Heart left ventricle (tissue), 16 donors: ENCODE measurements at regions of chr9 and their contacts with region 1.

Region 1: DNA sequence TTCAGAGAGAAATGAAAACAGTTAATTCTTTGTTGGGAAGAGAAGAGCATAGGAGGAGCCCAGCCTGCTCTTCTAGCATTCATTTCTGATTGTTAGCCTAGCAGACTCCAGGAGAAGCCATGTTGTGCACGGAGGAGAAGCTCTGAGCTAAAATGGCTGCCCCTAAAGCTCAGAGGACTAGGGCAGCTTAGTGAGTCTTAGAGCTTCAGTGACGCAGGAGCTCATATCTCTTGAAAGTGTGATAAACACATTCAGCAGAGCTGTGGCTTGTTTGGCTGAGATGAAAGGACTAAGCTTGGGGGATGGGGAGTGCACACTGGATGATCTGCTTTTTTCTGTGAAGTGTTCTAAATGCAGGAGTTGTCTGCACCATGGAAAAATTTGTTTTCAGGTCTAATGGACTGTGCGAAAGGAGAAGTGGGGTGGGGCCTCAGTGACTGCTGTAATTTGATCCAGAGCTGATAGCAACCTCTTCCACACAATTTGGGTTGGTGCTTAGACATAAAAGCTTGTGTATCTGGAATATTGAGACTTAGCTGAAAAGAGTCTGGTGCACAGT is 58.5 kb downstream of the ZNF462 start:
- DNase-seq: peak in 4 of 5 donors; percentile 56 to 66 (median 62)
- ATAC-seq: peak; percentile 88 to 95 (median 94)
- H3K4me3 ChIP-seq: peak overlapping the region in 8 of 12 donors; percentile 3 to 28 (median 16)
- H3K27ac ChIP-seq: peak overlapping the region; percentile 84 to 97 (median 94)
- H3K4me1 ChIP-seq: peaks cover 0 to 63% (median 34%) of the 10 kb centered on the region in 12 donors
- H3K27me3 ChIP-seq: no peaks in the 10 kb centered on the region
- CTCF ChIP-seq: no peak
- POLR2A ChIP-seq: no peak

Region 2: GRCh38 chr9:106869458-106869857 is 52.0 kb before region 1 on chr9:
- intact Hi-C with region 1: loop called in 7 of 10 experiments (anchors 2 to 10 kb)
- DNase-seq: no peak
- ATAC-seq: peak; percentile 44 to 61 (median 56)
- H3K4me3 ChIP-seq: no peak overlapping the region
- H3K27ac ChIP-seq: peak overlapping the region; percentile 45 to 79 (median 62)
- H3K4me1 ChIP-seq: peaks cover 6 to 84% (median 53%) of the 10 kb centered on the region in 12 donors
- H3K27me3 ChIP-seq: no peaks in the 10 kb centered on the region
- CTCF ChIP-seq: no peak
- POLR2A ChIP-seq: no peak

Region 3: GRCh38 chr9:106878924-106879323 is 42.5 kb before region 1 on chr9:
- intact Hi-C with region 1: loop called in 4 of 10 experiments (anchors 1 to 5 kb)
- DNase-seq: peak; percentile 74 to 89 (median 80)
- ATAC-seq: peak; percentile 91 to 96 (median 94)
- H3K4me3 ChIP-seq: no peak overlapping the region
- H3K27ac ChIP-seq: peak overlapping the region; percentile 11 to 78 (median 69)
- H3K4me1 ChIP-seq: peaks cover 0 to 88% (median 58%) of the 10 kb centered on the region in 12 donors
- H3K27me3 ChIP-seq: no peaks in the 10 kb centered on the region
- CTCF ChIP-seq: no peak
- POLR2A ChIP-seq: no peak

Region 4: DNA sequence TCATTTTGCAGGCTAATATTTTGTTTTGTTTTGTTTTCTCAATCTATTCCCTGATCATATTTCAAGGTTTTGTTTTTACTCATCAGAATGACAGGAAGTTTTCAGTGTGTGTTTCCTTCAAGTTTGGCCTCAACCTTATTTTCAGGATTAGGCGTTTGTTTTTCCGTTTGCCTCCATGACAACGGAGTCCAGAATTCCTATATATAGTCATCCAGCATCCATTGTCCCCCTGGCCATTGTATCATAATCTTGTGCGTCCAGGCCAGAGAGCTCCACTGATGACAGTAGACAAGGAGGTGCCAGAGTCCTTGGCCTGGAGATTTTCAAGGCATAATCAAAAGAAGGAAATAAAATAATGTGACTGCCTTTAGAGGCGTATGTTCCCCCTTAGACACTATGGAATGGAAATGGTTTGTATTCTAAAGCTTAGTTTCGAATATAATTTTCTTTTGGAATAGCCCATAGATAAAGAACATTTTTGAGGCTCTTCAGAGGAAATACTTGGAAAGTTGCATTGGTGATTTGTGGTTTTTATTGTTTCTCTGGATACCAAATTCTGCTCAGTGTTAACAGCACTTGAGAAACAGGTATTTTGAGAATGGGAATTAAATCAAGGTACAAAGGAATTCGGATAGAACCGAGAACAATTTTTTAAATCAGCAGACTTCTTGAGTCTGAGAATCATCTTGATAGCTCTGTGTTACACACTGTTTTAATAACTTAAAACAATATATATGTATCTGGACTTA is 41.4 kb after region 1 on chr9:
- intact Hi-C with region 1: loop called in 2 of 10 experiments (anchors 2 to 5 kb)
- DNase-seq: peak in 4 of 5 donors; percentile 57 to 73 (median 64)
- ATAC-seq: peak; percentile 90 to 97 (median 92)
- H3K4me3 ChIP-seq: no peak overlapping the region
- H3K27ac ChIP-seq: peak overlapping the region; percentile 31 to 81 (median 67)
- H3K4me1 ChIP-seq: peaks cover 0 to 59% (median 23%) of the 10 kb centered on the region in 12 donors
- H3K27me3 ChIP-seq: no peaks in the 10 kb centered on the region
- CTCF ChIP-seq: no peak
- POLR2A ChIP-seq: no peak